Ovary (tissue), 10 donors: ENCODE measurements at regions of chr7 and their contacts with region 1.

Region 1: DNA sequence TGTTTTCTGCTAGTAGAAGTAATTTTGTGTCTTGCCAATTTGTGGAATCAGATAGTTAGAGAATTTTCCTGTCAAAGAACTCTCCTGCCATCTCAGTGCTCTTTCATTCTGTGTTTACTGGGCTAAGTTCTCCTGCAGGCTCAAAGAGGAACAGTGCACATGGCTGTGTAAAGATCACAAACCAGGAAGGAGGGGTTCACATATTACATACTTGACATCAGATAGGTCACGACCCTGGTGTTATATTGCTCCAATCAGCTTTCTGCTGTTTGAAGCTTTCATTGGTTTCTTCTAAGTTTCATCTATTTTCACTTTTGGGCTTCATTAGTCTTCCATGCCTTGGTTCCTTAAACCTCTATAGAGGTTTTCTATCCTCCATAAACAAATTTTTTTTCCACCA is 13.5 kb upstream of the ELMO1 start:
- DNase-seq: no peak
- H3K4me3 ChIP-seq: no peak overlapping the region
- H3K27ac ChIP-seq: no peak overlapping the region
- H3K4me1 ChIP-seq: no peaks in the 10 kb centered on the region
- H3K27me3 ChIP-seq: no peaks in the 10 kb centered on the region
- CTCF ChIP-seq: no peak
- EP300 ChIP-seq: no peak
- POLR2A ChIP-seq: no peak

Region 2: GRCh38 chr7:37518266-37518665 is 56.1 kb after region 1 on chr7:
- intact Hi-C with region 1: loop called in 1 of 4 experiments (anchors 2 kb)
- DNase-seq: no peak
- H3K4me3 ChIP-seq: no peak overlapping the region
- H3K27ac ChIP-seq: no peak overlapping the region
- H3K4me1 ChIP-seq: peaks cover 9% of the 10 kb centered on the region
- H3K27me3 ChIP-seq: no peaks in the 10 kb centered on the region
- CTCF ChIP-seq: no peak
- EP300 ChIP-seq: no peak
- POLR2A ChIP-seq: no peak